ENCODE measurements at regions of chr15 and their contacts with region 1.

Region 1: DNA sequence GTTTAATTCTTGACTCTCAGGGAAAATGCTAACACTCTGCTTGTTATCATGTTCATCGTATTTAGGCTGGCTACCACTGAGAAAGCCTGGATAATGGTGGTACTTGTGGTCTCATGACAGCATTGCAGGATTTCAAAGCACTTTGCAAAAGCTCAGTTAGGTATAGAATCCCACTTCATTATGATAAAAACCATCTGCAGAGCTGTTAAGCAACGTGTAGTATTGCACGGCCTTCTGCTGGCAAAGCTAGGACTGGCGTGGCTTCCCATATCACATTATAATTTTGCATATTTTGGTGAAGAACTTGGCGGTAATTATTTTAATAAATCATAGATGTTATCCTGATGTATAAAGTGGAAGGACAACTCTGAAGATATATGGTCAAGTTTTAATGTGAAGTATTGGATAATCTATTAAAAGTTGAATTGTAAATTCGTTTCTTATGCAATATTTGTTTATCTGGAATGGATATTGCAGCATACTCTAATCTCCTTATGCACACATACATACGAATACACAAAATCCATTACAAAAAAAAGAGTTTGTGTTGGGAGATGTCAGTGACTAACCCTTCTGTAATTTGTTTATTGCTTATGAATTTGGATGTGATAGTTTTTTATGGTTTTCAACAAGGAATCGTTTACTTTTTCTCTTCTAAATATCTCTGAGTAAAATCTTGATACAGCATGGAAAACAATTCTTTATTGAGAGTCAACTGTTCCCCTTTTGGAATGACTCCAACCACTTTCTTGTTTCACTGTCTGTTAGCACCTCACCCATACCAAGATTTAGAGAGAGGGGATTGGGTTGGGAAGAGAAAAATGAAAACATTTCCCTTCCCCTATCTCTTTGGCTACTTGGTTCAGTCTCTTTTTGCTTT is 9.2 kb downstream of the RAB8B start:
- DNase-seq: peak; percentile 69
- ATAC-seq: peak; percentile 60
- H3K4me3 ChIP-seq: no peak overlapping the region
- H3K27ac ChIP-seq: peak overlapping the region; percentile 57; the same call in 1 of the 2 replicates
- H3K4me1 ChIP-seq: peaks cover 21% of the 10 kb centered on the region
- H3K27me3 ChIP-seq: no peaks in the 10 kb centered on the region
- CTCF ChIP-seq: no peak
- POLR2A ChIP-seq: no peak
- RAD21 ChIP-seq: no peak

Region 2: GRCh38 chr15:61749169-61749568 is 1449.4 kb before region 1 on chr15:
- CTCF ChIA-PET with region 1: no interaction called
- POLR2A ChIA-PET with region 1: no interaction called
- dilution Hi-C with region 1: no loop called
- in situ Hi-C with region 1: no loop called
- intact Hi-C with region 1: no loop called
- DNase-seq: no peak
- ATAC-seq: no peak
- H3K4me3 ChIP-seq: no peak overlapping the region
- H3K27ac ChIP-seq: no peak overlapping the region
- H3K4me1 ChIP-seq: no peaks in the 10 kb centered on the region
- H3K27me3 ChIP-seq: no peaks in the 10 kb centered on the region
- CTCF ChIP-seq: no peak
- POLR2A ChIP-seq: no peak
- RAD21 ChIP-seq: no peak

Region 3: GRCh38 chr15:62732078-62732477 is 466.5 kb before region 1 on chr15:
- CTCF ChIA-PET with region 1: no interaction called
- POLR2A ChIA-PET with region 1: no interaction called
- dilution Hi-C with region 1: no loop called
- in situ Hi-C with region 1: no loop called
- intact Hi-C with region 1: no loop called
- DNase-seq: no peak
- ATAC-seq: no peak
- H3K4me3 ChIP-seq: no peak overlapping the region
- H3K27ac ChIP-seq: no peak overlapping the region
- H3K4me1 ChIP-seq: no peaks in the 10 kb centered on the region
- H3K27me3 ChIP-seq: no peaks in the 10 kb centered on the region
- CTCF ChIP-seq: no peak
- POLR2A ChIP-seq: no peak
- RAD21 ChIP-seq: no peak

Region 4: DNA sequence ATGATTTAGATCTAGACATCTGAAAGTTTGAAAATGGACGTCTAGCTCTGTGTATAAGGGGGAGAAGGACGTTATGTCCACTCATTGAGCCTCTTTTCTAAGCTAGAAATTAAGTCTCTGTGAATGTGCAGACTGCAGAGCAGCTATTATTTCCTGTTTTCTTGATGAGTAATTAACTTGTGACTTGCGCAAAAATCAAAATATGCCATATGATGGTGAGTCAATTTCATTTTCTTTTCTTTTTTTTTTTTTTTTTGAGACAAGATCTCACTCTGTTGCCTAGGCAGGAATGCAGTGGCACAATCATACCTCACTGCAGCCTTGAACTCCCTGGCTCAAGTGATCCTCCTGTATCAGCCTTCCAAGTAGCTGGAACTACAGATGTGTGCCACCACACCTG is 62.8 kb before region 1 on chr15:
- CTCF ChIA-PET with region 1: no interaction called
- POLR2A ChIA-PET with region 1: no interaction called
- dilution Hi-C with region 1: no loop called
- in situ Hi-C with region 1: no loop called
- intact Hi-C with region 1: no loop called
- DNase-seq: peak; percentile 90
- ATAC-seq: peak; percentile 65
- H3K4me3 ChIP-seq: no peak overlapping the region
- H3K27ac ChIP-seq: peak overlapping the region; percentile 97
- H3K4me1 ChIP-seq: peaks cover 16% of the 10 kb centered on the region
- H3K27me3 ChIP-seq: no peaks in the 10 kb centered on the region
- CTCF ChIP-seq: no peak
- POLR2A ChIP-seq: 0 out of 2 replicates have a peak, but pooled peaks have one; percentile 44
- RAD21 ChIP-seq: no peak

Region 5: GRCh38 chr15:63250312-63250965 is 51.8 kb after region 1 on chr15:
- CTCF ChIA-PET with region 1: no interaction called
- POLR2A ChIA-PET with region 1: no interaction called
- dilution Hi-C with region 1: no loop called
- in situ Hi-C with region 1: no loop called
- intact Hi-C with region 1: loop called (anchors 5 kb)
- DNase-seq: peak; percentile 98
- ATAC-seq: peak; percentile 90
- H3K4me3 ChIP-seq: no peak overlapping the region
- H3K27ac ChIP-seq: peak overlapping the region; percentile 49; the same call in 1 of the 2 replicates
- H3K4me1 ChIP-seq: peaks cover 17% of the 10 kb centered on the region
- H3K27me3 ChIP-seq: no peaks in the 10 kb centered on the region
- CTCF ChIP-seq: no peak
- POLR2A ChIP-seq: no peak
- RAD21 ChIP-seq: 0 out of 2 replicates have a peak, but pooled peaks have one; percentile 4

Region 6: DNA sequence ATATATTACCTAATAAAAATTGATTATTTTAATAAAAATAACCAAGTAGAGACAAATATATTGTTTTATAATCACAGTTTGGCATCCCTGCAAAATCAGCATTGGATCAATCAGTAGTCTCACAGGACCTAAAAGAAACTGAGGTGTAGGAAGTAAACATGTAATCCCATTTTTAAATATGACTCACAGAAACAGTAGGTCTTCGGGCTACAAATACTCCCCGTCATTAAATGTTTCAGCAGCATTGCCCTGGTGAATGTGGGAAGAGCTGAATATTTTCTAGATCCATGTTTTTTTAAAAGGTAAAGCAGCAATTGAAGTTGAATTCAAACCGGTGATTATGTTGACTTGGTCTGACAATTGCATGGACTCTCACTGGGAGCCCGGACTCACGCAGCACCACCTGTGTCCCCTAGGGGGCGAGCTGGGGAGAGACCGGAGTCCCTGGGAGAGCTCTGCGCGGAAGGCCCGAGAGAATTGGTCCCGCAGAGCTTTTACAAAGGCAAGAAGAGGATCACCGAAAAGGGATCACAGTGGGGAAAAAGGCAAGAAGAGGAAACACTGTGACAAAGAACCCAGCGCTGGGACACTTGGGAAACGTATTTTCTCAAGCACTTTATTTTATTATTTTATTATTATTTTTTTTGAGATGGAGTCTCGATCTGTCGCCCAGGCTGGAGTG is 288.6 kb after region 1 on chr15:
- CTCF ChIA-PET with region 1: no interaction called
- POLR2A ChIA-PET with region 1: no interaction called
- dilution Hi-C with region 1: no loop called
- in situ Hi-C with region 1: no loop called
- intact Hi-C with region 1: no loop called
- DNase-seq: peak; percentile 61
- ATAC-seq: peak; percentile 87
- H3K4me3 ChIP-seq: no peak overlapping the region
- H3K27ac ChIP-seq: no peak overlapping the region
- H3K4me1 ChIP-seq: peaks cover 8% of the 10 kb centered on the region
- H3K27me3 ChIP-seq: no peaks in the 10 kb centered on the region
- CTCF ChIP-seq: peak; percentile 77
- POLR2A ChIP-seq: no peak
- RAD21 ChIP-seq: peak; percentile 67

Measured in IMR-90 (cell line).